IMR-90 (cell line): ENCODE measurements at regions of chr2 and their contacts with region 1.

Region 1: DNA sequence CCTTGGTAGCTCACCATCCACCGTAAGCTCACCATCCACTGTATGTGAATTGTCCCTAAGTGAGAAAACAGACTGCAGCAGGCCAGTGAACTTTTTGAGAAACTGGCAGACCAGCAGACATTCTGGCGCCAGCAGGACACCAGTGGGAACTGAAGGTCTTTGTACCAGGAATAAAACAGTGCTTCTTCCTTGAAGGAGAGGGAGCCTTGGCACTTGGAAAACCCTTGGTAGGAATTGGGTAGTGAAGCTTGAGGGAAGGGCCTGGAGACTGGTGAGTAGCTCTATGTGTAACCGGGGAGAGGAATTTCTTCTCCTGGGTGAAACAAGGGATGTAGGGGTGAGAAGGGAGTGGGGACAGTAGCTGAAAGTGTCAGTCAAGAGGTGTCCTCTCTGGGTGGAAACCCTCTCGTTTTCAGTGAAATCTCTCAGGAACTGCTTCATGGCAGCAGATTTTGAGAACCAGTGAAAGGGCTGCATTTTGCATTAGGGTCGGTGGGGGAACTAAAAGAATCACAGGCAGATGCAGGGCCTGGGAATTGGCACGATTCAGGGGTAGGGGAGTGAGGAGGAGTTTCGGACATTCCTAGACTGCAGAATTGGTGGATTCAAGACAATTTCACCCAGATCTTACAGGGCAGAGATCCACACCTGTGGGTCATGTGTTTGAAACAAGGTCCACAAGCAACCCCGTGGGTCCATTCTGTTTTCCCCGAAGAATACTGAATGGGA is 131.5 kb upstream of the DLX2 start:
- DNase-seq: no peak
- ATAC-seq: no peak
- H3K4me3 ChIP-seq: no peak overlapping the region
- H3K27ac ChIP-seq: no peak overlapping the region
- H3K4me1 ChIP-seq: peaks cover 24% of the 10 kb centered on the region
- H3K27me3 ChIP-seq: peaks cover 12% of the 10 kb centered on the region
- CTCF ChIP-seq: no peak
- POLR2A ChIP-seq: no peak
- RAD21 ChIP-seq: no peak

Region 2: DNA sequence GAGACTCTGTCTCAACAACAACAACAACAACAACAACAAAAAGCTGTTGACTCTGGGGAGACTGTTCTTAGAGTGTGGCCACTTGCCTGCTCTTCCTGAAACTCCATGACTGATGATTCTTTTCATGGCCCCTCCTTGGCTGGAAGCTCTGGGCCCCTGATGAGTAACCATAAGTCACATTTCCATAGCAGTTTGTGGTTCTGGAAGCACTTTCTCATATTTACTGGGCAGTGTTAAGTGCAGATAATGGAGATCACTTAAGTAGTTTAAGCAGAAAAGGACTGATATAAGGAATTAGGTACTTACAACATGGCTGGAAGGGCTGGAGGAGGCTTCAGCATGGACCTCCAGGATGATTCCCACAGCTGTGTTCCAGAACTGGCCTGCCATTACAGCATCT is 15.8 kb after region 1 on chr2:
- CTCF ChIA-PET with region 1: no interaction called
- POLR2A ChIA-PET with region 1: no interaction called
- dilution Hi-C with region 1: no loop called
- in situ Hi-C with region 1: no loop called
- intact Hi-C with region 1: loop called (anchors 2 kb)
- DNase-seq: peak; percentile 89
- ATAC-seq: peak; percentile 7; the same call in 1 of the 2 replicates
- H3K4me3 ChIP-seq: no peak overlapping the region
- H3K27ac ChIP-seq: peak overlapping the region; percentile 59; the same call in 1 of the 2 replicates
- H3K4me1 ChIP-seq: peaks cover 30% of the 10 kb centered on the region
- H3K27me3 ChIP-seq: no peaks in the 10 kb centered on the region
- CTCF ChIP-seq: no peak
- POLR2A ChIP-seq: no peak
- RAD21 ChIP-seq: no peak

Region 3: GRCh38 chr2:172270278-172271079 is 36.3 kb after region 1 on chr2:
- CTCF ChIA-PET with region 1: no interaction called
- POLR2A ChIA-PET with region 1: no interaction called
- dilution Hi-C with region 1: no loop called
- in situ Hi-C with region 1: no loop called
- intact Hi-C with region 1: no loop called
- DNase-seq: peak; percentile 51
- ATAC-seq: 0 out of 2 replicates have a peak, but pooled peaks have one; percentile 27
- H3K4me3 ChIP-seq: no peak overlapping the region
- H3K27ac ChIP-seq: no peak overlapping the region
- H3K4me1 ChIP-seq: peaks cover 5% of the 10 kb centered on the region; the same call in 1 of the 2 replicates
- H3K27me3 ChIP-seq: no peaks in the 10 kb centered on the region
- CTCF ChIP-seq: no peak
- POLR2A ChIP-seq: no peak
- RAD21 ChIP-seq: no peak